OCI-LY7 (cell line): ENCODE measurements at regions of chr1 and their contacts with region 1.

Region 1: DNA sequence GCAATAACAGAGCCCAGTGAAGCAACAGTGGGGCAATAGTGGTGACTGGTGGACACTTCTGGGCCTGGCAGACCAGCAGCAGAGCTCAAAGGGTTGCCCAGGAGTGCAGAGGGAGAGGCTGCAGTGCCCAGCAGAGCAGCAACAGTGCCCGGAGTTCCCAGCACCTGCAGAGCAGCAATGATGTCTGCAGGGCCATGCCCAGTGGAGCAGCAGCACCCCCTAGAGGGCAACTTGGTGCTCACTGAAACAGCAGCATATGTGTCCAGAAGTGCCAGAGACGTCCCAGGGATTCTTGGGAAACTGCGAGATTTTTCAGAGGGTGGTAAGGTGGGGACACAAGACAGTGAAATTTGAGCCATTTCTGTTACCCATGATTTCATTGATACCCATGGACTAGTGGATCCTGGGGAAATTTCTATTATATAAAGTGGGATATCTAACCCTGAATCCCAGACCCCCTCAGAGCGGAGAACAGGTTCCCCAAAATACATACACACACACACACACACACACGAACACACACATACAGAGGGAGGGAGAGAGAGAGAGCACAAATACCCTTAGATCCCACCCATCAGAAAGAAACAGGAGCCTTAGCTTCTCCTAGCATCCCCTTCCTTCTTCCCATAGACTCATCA is 156.9 kb upstream of the GJB5 start:
- DNase-seq: peak; percentile 58
- H3K4me3 ChIP-seq: no peak overlapping the region
- H3K27ac ChIP-seq: no peak overlapping the region
- H3K4me1 ChIP-seq: no peaks in the 10 kb centered on the region
- CTCF ChIP-seq: peak; percentile 90

Region 2: DNA sequence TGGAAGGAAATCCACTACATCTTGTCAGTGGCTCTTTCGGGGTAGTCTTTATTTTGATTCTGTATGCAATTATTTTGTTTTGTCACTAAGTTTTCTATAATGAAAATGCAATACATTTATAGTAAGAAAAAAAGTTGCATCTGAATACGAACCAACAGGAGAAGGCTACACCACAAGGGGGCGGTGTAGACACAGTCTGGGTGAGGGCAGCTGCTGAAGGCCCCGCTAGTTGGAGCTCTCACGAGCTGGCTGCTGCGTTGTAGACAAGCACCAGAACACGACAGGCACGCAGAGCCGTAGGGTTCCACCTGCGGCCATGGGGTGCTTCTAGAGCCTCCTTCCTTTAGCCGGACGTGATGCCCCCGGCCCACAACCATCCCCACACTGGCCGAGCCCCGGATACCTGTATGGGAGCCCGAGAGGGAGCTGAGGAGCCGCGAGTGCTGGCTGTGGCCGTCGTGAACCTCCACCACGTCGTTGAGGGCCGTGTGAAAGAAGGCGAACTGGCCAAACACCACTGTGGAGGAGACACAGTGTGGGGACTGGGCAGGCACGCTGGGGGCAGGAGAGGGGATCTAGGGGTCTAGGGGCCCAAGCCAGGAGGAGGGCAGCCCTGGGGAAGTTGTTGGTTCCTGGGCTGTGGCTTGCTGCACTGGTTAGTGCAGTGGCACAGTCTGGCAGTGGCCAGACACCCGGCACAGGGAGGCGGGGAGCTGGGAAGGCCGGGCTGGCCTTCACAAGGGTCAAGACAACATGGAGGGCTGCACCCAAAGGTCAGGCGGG is 964.8 kb before region 1 on chr1:
- CTCF ChIA-PET with region 1: no interaction called
- POLR2A ChIA-PET with region 1: no interaction called
- intact Hi-C with region 1: loop called (anchors 5 kb)
- DNase-seq: peak; percentile 83
- H3K4me3 ChIP-seq: no peak overlapping the region
- H3K27ac ChIP-seq: no peak overlapping the region
- H3K4me1 ChIP-seq: no peaks in the 10 kb centered on the region
- CTCF ChIP-seq: peak; percentile 99

Region 3: DNA sequence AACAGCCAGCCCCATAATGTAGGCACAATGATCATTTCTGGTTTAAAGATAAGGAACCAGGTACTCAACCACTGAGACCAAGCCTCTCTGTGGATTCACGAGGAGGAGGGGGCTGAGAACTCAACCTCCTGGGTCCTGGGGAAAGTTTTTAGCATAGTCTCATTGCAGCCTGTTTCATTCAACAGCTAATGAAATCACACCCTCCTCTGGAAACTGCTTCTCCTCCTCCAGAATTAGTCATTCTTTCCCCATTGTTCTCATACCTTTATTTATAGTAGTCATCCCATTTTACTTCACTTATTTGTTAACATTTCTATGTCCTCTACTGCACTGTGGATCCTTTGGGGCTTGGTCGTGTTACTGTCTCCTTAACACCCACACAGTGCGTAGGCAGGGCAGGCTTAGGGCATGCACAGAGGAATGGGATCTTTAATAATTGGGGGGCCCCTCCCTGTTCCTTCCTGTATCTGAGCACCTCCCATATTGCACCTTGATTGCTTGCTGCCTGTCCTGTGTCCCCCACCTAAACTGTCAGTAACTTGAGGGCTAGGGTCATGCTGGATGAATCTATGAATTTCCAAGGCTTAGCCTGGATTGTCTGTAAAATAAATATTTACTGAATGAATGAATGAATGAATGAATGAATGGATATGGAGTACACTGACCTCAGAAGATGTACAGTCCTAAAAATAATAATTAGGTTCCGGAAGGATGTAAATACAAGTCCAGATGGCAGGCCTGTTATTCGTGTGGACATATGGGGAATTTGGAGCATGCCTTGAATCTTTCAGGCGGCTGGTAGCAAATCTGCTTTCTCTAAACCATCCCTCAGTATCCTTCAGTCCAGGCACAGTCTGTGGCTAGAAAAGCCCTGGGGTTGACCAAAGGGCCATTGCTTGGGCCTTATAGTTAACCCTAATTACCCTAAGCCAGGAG is 887.9 kb before region 1 on chr1:
- CTCF ChIA-PET with region 1: no interaction called
- POLR2A ChIA-PET with region 1: no interaction called
- intact Hi-C with region 1: no loop called
- DNase-seq: no peak
- H3K4me3 ChIP-seq: no peak overlapping the region
- H3K27ac ChIP-seq: no peak overlapping the region
- H3K4me1 ChIP-seq: no peaks in the 10 kb centered on the region
- CTCF ChIP-seq: no peak

Region 4: GRCh38 chr1:34460193-34460592 is 137.8 kb before region 1 on chr1:
- CTCF ChIA-PET with region 1: no interaction called
- POLR2A ChIA-PET with region 1: no interaction called
- intact Hi-C with region 1: loop called (anchors 5 kb)
- DNase-seq: peak; percentile 46
- H3K4me3 ChIP-seq: no peak overlapping the region
- H3K27ac ChIP-seq: no peak overlapping the region
- H3K4me1 ChIP-seq: no peaks in the 10 kb centered on the region
- CTCF ChIP-seq: peak; percentile 78